GM18951 (cell line): ENCODE measurements at regions of chr11 and their contacts with region 1.

Region 1: DNA sequence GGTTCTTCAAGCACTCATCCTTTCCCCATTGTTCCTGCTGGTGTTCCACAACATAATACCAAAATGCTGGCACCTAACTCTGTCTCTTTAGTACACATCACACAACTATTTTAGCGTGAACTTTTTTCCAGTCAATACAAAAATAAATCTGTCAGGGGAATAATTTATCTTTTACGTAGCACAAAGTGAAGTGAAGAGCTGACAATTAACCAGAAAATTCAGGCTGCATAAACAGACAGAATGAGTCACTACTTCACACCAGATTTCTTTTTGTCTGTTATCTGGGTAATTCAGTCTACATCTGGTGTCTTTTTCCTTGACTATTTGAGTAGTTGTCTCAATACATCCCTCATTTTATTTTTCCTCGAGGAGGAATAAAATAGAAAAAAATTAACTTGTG is 7.9 kb upstream of the ETS1 start:
- POLR2A ChIP-seq: no peak

Region 2: DNA sequence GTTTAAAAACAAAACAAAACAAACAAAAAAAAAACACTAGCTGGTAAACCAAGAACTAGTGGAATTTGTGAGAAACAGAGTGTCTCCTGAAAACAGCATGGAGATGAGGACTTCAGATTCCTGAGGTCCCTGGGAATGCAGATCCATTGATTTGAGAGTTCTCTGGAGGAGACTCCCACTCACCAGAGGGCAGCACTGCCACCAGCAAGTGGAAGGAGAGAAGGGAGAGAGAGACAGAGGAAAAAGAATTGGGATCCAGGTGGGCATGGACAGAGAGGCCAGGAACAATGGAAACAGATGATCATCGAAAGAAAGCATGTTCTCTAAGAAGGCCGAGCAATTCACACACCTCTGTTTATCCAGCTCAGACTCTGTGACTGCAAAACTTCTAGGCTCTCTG is 39.6 kb before region 1 on chr11:
- in situ Hi-C with region 1: loop called (anchors 5 kb)
- POLR2A ChIP-seq: no peak